CD4-positive, alpha-beta memory T cell (primary cell): ENCODE measurements at regions of chr9 and their contacts with region 1.

Region 1: GRCh38 chr9:128702445-128702948 is at the start of gene PKN3:
- DNase-seq: peak; percentile 79 to 87 (median 82)
- H3K4me3 ChIP-seq: peak within 1 kb of the TSS; percentile 17 to 45
- H3K4me3 Mint-ChIP-seq: peak within 1 kb of the TSS; percentile 83 to 95 (median 90)
- H3K27ac ChIP-seq: peak within 1 kb of the TSS; percentile 38
- H3K27ac Mint-ChIP-seq: peak within 1 kb of the TSS in 6 of 7 donors; percentile 76 to 94 (median 84)
- H3K4me1 ChIP-seq: peaks cover 10% of the 10 kb centered on the region
- H3K4me1 Mint-ChIP-seq: peaks cover 2 to 19% (median 11%) of the 10 kb centered on the region in 4 donors
- H3K27me3 ChIP-seq: no peaks in the 10 kb centered on the region
- H3K27me3 Mint-ChIP-seq: no peaks in the 10 kb centered on the region
- total RNA-seq, gene PKN3: 1.7 to 2.6 TPM

Region 2: DNA sequence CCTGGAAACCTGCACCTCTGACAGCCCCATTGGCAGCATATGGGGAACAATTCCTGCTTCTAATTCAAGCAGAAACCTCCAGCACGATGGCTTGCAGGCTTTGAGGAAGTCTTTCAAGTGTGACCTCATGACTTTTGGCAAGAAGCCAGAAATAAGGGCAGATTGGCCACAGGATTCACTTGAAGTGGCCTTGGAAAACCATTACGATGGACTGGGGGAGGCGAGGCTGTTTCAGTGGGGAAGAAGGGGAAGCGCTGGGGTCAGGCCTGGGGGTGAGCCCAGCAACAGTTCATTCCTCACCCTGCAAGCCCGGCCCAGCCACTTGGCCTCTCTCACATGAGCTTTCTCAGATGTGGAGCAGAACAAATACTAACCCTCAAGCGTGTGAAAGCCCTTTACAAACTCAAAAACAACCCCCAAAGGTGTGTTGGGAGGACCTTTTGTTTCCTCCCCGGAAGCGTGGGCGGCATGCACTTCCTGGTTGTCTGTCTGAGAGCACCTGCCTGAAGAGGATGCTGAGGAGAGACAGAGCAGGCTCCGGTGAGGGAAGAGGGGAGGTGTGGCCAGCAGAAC is 694.8 kb before region 1 on chr9:
- CTCF ChIA-PET with region 1: no interaction called
- POLR2A ChIA-PET with region 1: no interaction called
- intact Hi-C with region 1: no loop called
- DNase-seq: peak; percentile 90 to 97 (median 92)
- H3K4me3 ChIP-seq: peak overlapping the region in 1 of 2 donors; percentile 29
- H3K4me3 Mint-ChIP-seq: peak overlapping the region; percentile 75 to 93 (median 82)
- H3K27ac ChIP-seq: peak overlapping the region; percentile 46
- H3K27ac Mint-ChIP-seq: peak overlapping the region; percentile 94 to 100 (median 97)
- H3K4me1 ChIP-seq: peaks cover 79% of the 10 kb centered on the region
- H3K4me1 Mint-ChIP-seq: peaks cover 33 to 90% (median 61%) of the 10 kb centered on the region in 4 donors
- H3K27me3 ChIP-seq: no peaks in the 10 kb centered on the region
- H3K27me3 Mint-ChIP-seq: no peaks in the 10 kb centered on the region

Region 3: DNA sequence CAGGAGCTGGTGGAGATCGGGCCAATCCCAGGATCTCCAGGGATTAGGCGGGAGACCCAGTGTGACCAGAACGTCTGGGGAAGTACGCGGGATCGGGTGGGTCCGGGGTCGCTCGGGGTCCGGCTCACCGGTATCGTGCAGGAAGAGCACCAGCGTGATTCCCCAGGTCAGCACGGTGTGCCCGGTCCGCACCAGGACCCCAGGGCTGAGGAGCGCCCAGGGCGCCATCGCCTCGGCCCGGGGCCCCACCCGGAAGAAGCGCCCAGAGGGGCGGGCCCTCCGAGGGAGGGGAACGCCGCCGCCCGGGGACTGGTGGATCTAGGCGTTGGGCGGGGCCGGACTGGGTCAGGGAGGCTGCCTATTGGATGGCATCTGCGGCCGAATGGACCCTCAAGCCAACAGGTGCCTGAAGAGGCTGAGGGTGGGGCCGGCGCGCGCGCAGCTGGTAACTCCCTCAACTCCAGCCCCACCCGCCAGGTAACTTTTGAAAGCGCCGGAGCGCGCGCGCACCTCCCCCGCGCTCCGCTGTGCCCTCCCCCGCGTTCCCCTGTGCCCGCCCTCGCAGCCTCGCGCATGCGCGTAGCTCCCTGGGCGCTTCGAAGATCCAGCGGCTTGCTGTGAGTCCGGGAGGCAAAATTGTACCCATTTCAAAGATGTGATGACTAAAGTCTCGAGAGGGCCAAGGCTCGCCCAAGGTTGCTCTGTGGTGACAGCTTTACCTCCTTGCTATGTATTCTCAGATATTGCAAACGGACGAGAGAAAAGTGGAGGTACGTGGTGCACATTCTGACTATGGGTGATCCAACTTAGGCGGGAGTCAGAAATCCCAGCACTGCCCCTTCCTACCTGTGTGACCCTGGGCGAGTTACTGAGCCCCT is 21.6 kb after region 1 on chr9 and contains the start of gene ZDHHC12:
- CTCF ChIA-PET with region 1: interaction called, 3 read pairs
- POLR2A ChIA-PET with region 1: interaction called, 5 read pairs
- intact Hi-C with region 1: loop called (anchors 1 kb)
- DNase-seq: peak; percentile 98 to 99 (median 99)
- H3K4me3 ChIP-seq: peak within 1 kb of the TSS; percentile 89 to 95
- H3K4me3 Mint-ChIP-seq: peak within 1 kb of the TSS; percentile 90 to 94 (median 92)
- H3K27ac ChIP-seq: peak within 1 kb of the TSS; percentile 70
- H3K27ac Mint-ChIP-seq: peak within 1 kb of the TSS; percentile 89 to 97 (median 95)
- H3K4me1 ChIP-seq: peaks cover 28% of the 10 kb centered on the region
- H3K4me1 Mint-ChIP-seq: peaks cover 23 to 45% (median 32%) of the 10 kb centered on the region in 4 donors
- H3K27me3 ChIP-seq: no peaks in the 10 kb centered on the region
- H3K27me3 Mint-ChIP-seq: no peaks in the 10 kb centered on the region
- total RNA-seq, gene ZDHHC12: 24.6 to 25.7 TPM